ENCODE measurements at regions of chr3 and their contacts with region 1.

Region 1: GRCh38 chr3:11379233-11379823 is 107.1 kb downstream of the ATG7 start:
- DNase-seq: peak; percentile 73
- H3K4me3 Mint-ChIP-seq: no peak overlapping the region
- H3K27ac Mint-ChIP-seq: no peak overlapping the region
- H3K4me1 Mint-ChIP-seq: no peaks in the 10 kb centered on the region
- H3K27me3 Mint-ChIP-seq: no peaks in the 10 kb centered on the region

Region 2: GRCh38 chr3:11651900-11652299 is 272.6 kb after region 1 on chr3:
- intact Hi-C with region 1: loop called (anchors 1 kb)
- DNase-seq: no peak
- H3K4me3 Mint-ChIP-seq: no peak overlapping the region
- H3K27ac Mint-ChIP-seq: no peak overlapping the region
- H3K4me1 Mint-ChIP-seq: peaks cover 5% of the 10 kb centered on the region
- H3K27me3 Mint-ChIP-seq: peaks cover 28% of the 10 kb centered on the region

Region 3: GRCh38 chr3:11803977-11804892 is 424.9 kb after region 1 on chr3:
- intact Hi-C with region 1: loop called (anchors 5 kb)
- DNase-seq: peak; percentile 82
- H3K4me3 Mint-ChIP-seq: no peak overlapping the region
- H3K27ac Mint-ChIP-seq: no peak overlapping the region
- H3K4me1 Mint-ChIP-seq: peaks cover 8% of the 10 kb centered on the region
- H3K27me3 Mint-ChIP-seq: no peaks in the 10 kb centered on the region